GM12878 (cell line): ENCODE measurements at regions of chr12 and their contacts with region 1.

Region 1: DNA sequence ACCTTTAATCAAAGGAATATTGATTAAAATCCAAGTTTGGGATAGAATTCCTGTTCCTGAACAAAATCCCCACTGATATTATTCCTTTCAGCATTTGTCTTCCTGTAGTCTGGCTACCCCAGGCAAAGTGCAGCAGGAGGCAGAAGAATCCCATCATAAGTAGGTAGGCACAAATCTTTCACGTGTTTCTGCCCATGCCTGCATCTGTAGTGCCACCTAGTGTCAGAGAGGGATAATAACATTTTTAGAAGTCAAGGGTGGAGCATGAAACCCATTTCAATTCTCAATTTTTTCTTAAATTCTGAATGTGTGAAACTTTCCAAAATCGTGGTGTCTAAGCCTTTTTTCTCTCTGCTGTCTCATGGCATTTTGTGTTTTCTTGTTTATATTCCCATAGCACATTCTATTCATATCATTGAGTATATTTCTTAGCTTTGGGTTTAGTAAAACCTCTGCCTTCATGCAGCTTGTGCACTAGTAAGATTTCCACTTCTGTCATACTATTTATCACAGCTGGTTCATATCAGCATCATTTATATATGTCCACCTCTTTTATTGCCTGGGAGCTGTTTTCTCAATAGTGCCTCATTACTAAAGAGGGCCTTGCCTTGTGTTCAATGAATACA is 47.8 kb upstream of the RERG start:
- DNase-seq: no peak
- ATAC-seq: peak; percentile 86
- H3K4me3 ChIP-seq: no peak overlapping the region
- H3K27ac ChIP-seq: no peak overlapping the region
- H3K4me1 ChIP-seq: no peaks in the 10 kb centered on the region
- H3K27me3 ChIP-seq: no peaks in the 10 kb centered on the region
- CTCF ChIP-seq: peak; percentile 80 to 86 (median 84)
- EP300 ChIP-seq: no peak
- POLR2A ChIP-seq: no peak
- RAD21 ChIP-seq: peak; percentile 89

Region 2: DNA sequence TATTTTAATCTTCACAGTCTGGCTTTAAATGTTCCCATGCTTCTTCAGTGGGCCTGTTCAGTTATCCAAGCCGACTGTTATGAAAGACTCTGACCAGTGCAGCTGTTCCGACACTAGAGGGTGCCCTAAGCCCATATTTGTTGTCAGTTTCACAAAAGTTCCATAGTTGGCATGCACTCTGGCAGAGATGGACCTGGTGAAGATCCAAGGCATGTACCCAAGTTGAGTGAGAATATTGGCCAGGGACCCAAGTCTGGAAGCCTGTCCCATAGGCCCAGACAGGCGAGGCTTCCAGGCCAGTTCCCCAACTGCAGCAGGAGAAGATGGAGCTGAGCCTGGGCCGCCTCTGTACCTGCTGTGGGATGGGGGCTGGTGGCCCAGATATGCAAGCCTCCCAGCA is 545.3 kb before region 1 on chr12:
- CTCF ChIA-PET with region 1: interaction called, 5 read pairs
- POLR2A ChIA-PET with region 1: no interaction called
- RAD21 ChIA-PET with region 1: interaction called, 3 read pairs
- SMC1A ChIA-PET with region 1: interaction called, 3 read pairs
- in situ Hi-C with region 1: loop called (anchors 10 kb)
- intact Hi-C with region 1: loop called (anchors 2 kb)
- DNase-seq: peak; percentile 37
- ATAC-seq: peak; percentile 88
- H3K4me3 ChIP-seq: no peak overlapping the region
- H3K27ac ChIP-seq: no peak overlapping the region
- H3K4me1 ChIP-seq: no peaks in the 10 kb centered on the region
- H3K27me3 ChIP-seq: no peaks in the 10 kb centered on the region
- CTCF ChIP-seq: peak; percentile 72 to 79 (median 74)
- EP300 ChIP-seq: no peak
- POLR2A ChIP-seq: no peak
- RAD21 ChIP-seq: peak; percentile 79

Region 3: GRCh38 chr12:15151161-15152120 is 117.6 kb before region 1 on chr12:
- CTCF ChIA-PET with region 1: no interaction called
- POLR2A ChIA-PET with region 1: no interaction called
- RAD21 ChIA-PET with region 1: no interaction called
- SMC1A ChIA-PET with region 1: no interaction called
- in situ Hi-C with region 1: no loop called
- intact Hi-C with region 1: loop called (anchors 1 kb)
- DNase-seq: no peak
- ATAC-seq: peak; percentile 57
- H3K4me3 ChIP-seq: no peak overlapping the region
- H3K27ac ChIP-seq: no peak overlapping the region
- H3K4me1 ChIP-seq: no peaks in the 10 kb centered on the region
- H3K27me3 ChIP-seq: peaks cover 0 to 4% of the 10 kb centered on the region in 2 experiments; a peak in 1 of 4 replicates
- CTCF ChIP-seq: peak in 2 of 3 experiments; percentile 16 to 41; a peak in 2 of 6 replicates
- EP300 ChIP-seq: no peak
- POLR2A ChIP-seq: no peak
- RAD21 ChIP-seq: peak; percentile 14; the same call in 1 of the 2 replicates

Region 4: DNA sequence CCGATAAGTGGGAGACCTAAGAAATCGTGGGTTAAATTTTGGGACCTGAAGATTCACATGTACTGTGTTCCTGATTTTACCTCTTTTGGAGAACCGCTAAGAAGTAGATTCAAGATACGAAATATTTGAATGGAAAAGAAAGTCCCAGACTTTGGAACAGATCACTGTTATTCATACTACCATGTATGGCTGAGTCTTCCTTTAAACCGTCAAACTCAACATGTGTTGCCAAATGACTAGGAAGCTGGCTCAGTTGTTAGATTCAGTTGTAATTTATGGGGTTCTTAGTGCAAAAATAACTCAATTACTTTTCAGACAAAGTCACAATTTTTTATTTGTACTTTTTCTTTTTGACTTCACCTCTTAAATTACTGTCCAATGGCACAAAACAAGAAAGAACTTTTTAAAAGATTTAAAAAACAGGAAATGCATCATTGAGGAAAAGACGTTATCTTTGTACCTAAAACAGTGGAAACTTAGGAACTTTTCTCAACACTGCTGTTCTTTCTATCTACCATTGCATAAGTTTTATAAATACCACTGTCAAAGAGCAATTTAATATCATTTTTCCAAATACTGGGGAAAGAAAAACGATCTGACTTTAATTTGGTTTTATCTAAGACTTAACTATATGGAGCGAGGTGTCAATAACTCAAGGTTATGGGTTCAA is 63.6 kb before region 1 on chr12:
- CTCF ChIA-PET with region 1: no interaction called
- POLR2A ChIA-PET with region 1: no interaction called
- RAD21 ChIA-PET with region 1: no interaction called
- SMC1A ChIA-PET with region 1: no interaction called
- in situ Hi-C with region 1: no loop called
- intact Hi-C with region 1: no loop called
- DNase-seq: no peak
- ATAC-seq: no peak
- H3K4me3 ChIP-seq: no peak overlapping the region
- H3K27ac ChIP-seq: no peak overlapping the region
- H3K4me1 ChIP-seq: no peaks in the 10 kb centered on the region
- H3K27me3 ChIP-seq: no peaks in the 10 kb centered on the region
- CTCF ChIP-seq: no peak
- EP300 ChIP-seq: no peak
- POLR2A ChIP-seq: no peak
- RAD21 ChIP-seq: no peak

Region 5: DNA sequence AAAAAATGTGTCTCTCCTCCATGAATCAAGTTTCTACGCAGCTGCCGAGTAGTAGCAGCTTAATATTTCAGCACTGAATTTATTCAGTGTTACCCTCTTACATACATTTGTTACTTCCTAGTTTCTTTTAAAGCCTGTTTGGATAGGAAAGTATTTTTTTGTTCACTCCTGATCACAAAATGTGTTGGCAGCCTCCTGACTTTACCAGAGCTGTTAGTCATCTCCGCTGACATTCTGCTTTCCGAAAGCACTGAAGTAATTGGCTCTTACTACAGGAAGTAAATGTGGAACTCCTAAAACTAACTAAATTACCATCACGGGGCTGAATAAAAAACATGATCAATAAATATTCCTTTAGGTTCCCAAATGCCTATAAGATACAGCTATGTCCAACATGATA is 294.6 kb after region 1 on chr12:
- CTCF ChIA-PET with region 1: no interaction called
- POLR2A ChIA-PET with region 1: no interaction called
- RAD21 ChIA-PET with region 1: no interaction called
- SMC1A ChIA-PET with region 1: no interaction called
- in situ Hi-C with region 1: no loop called
- intact Hi-C with region 1: no loop called
- DNase-seq: no peak
- ATAC-seq: no peak
- H3K4me3 ChIP-seq: no peak overlapping the region
- H3K27ac ChIP-seq: no peak overlapping the region
- H3K4me1 ChIP-seq: no peaks in the 10 kb centered on the region
- H3K27me3 ChIP-seq: no peaks in the 10 kb centered on the region
- CTCF ChIP-seq: no peak
- EP300 ChIP-seq: no peak
- POLR2A ChIP-seq: no peak
- RAD21 ChIP-seq: no peak